ENCODE measurements at regions of chr1 and their contacts with region 1.

Region 1: GRCh38 chr1:16366722-16367257 is at the start of gene SZRD1:
- DNase-seq: peak; percentile 90
- H3K4me3 Mint-ChIP-seq: peak within 1 kb of the TSS; percentile 87
- H3K27ac Mint-ChIP-seq: peak within 1 kb of the TSS; percentile 74
- H3K4me1 Mint-ChIP-seq: peaks cover 10% of the 10 kb centered on the region
- H3K27me3 Mint-ChIP-seq: no peaks in the 10 kb centered on the region
- CTCF ChIP-seq: no peak
- total RNA-seq, gene SZRD1: 95.9 and 107 TPM in 2 replicates

Region 2: DNA sequence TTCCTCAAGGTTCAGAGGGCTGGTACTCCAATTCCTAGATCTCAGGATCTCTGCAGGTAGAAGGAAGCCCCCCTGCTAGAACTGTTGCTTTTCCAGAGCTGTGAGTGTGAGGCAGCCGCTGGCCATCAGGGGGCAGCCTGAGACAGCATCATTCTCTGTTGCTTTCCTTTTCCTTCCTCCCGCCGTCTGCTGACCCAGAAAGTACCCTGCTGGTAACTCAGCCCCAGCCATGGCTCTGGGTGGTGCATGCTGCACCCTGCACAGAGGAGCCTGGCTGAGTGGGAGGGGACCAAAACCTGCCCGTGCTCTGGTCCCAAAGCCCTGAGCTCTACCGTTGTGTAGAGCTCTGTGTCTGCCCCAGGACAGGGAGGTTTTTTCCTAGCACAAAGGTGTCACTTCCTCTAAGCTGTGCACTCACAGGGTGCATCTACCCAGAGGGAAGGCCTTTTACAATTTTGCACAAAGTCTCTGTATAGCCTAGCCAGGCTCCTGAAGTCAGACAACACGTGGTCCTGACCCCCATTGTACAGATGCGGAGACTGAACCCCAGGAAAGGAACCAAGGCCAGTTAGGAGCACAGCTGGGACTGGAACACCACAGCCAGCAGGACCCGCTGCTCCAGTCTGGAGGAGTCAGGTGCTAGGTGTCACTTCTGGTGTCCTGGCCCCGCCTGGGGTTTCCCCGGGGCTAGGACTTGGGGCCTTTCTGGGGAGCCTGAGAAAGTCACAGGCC is 287.7 kb before region 1 on chr1:
- CTCF ChIA-PET with region 1: interaction called, 8 read pairs
- intact Hi-C with region 1: loop called (anchors 5 kb)
- DNase-seq: peak; percentile 80
- H3K4me3 Mint-ChIP-seq: no peak overlapping the region
- H3K27ac Mint-ChIP-seq: no peak overlapping the region
- H3K4me1 Mint-ChIP-seq: peaks cover 30% of the 10 kb centered on the region
- H3K27me3 Mint-ChIP-seq: no peaks in the 10 kb centered on the region
- CTCF ChIP-seq: peak; percentile 73

Region 3: DNA sequence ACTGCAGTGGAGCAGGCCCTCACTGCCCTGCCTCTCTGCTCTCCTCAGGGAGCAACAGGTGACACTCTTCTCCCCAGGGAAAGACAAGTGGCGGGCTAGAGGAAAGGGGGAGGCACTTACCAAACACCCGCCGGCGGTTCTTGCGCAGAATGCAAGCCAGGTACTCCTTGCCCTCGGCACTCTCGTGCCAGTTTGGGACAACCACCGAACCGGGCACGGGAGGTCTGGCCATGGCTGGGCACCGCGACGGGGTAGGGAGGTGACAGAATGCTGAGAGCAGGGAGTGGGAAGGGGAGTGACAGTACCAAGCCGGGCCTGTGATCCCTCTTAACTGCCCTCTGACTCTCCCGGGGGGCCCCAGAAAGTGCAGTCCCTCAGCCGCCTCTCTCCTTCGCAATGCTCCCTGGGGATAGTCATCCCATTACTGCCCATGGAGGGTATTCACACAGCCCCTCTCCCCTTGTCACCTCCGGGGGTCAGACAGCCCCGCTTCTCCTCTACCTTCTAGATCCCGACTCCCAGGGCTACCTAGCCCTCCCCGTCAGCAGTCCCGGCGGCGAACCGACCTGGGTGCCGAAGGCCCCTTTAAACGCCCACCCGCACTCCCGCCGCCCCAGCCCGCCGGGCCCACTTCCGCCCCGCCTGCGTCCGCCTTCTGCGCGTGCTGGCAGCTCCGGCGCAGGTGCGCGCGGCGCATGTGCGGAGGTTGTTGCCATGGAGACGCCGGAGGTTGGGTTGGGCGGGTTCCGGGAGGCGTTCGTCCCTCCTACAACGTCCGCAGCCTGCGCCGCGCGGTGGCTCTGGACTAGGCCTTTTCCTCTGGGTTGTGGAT is 130.1 kb before region 1 on chr1 and contains the start of gene CPLANE2:
- CTCF ChIA-PET with region 1: interaction called, 3 read pairs
- intact Hi-C with region 1: loop called (anchors 5 kb)
- DNase-seq: peak; percentile 93
- H3K4me3 Mint-ChIP-seq: peak within 1 kb of the TSS; percentile 78
- H3K27ac Mint-ChIP-seq: peak within 1 kb of the TSS; percentile 87
- H3K4me1 Mint-ChIP-seq: no peaks in the 10 kb centered on the region
- H3K27me3 Mint-ChIP-seq: no peaks in the 10 kb centered on the region
- CTCF ChIP-seq: no peak
- total RNA-seq, gene CPLANE2: 4.2 and 7.4 TPM in 2 replicates

Region 4: GRCh38 chr1:16266411-16267118 is 100.2 kb before region 1 on chr1:
- CTCF ChIA-PET with region 1: no interaction called
- intact Hi-C with region 1: no loop called
- DNase-seq: no peak
- H3K4me3 Mint-ChIP-seq: no peak overlapping the region
- H3K27ac Mint-ChIP-seq: no peak overlapping the region
- H3K4me1 Mint-ChIP-seq: peaks cover 15% of the 10 kb centered on the region
- H3K27me3 Mint-ChIP-seq: no peaks in the 10 kb centered on the region
- CTCF ChIP-seq: no peak

Region 5: GRCh38 chr1:16289963-16290362 is 76.8 kb before region 1 on chr1:
- CTCF ChIA-PET with region 1: interaction called, 3 read pairs
- intact Hi-C with region 1: loop called (anchors 2 kb)
- DNase-seq: no peak
- H3K4me3 Mint-ChIP-seq: no peak overlapping the region
- H3K27ac Mint-ChIP-seq: no peak overlapping the region
- H3K4me1 Mint-ChIP-seq: no peaks in the 10 kb centered on the region
- H3K27me3 Mint-ChIP-seq: no peaks in the 10 kb centered on the region
- CTCF ChIP-seq: no peak

Region 6: GRCh38 chr1:16349847-16350406 is 16.9 kb before region 1 on chr1:
- CTCF ChIA-PET with region 1: interaction called, 10 read pairs
- intact Hi-C with region 1: no loop called
- DNase-seq: no peak
- H3K4me3 Mint-ChIP-seq: no peak overlapping the region
- H3K27ac Mint-ChIP-seq: no peak overlapping the region
- H3K4me1 Mint-ChIP-seq: peaks cover 10% of the 10 kb centered on the region
- H3K27me3 Mint-ChIP-seq: no peaks in the 10 kb centered on the region
- CTCF ChIP-seq: no peak

Region 7: GRCh38 chr1:17881761-17882160 is 1515.0 kb after region 1 on chr1:
- CTCF ChIA-PET with region 1: no interaction called
- intact Hi-C with region 1: no loop called
- DNase-seq: no peak
- H3K4me3 Mint-ChIP-seq: no peak overlapping the region
- H3K27ac Mint-ChIP-seq: no peak overlapping the region
- H3K4me1 Mint-ChIP-seq: no peaks in the 10 kb centered on the region
- H3K27me3 Mint-ChIP-seq: peaks cover 93% of the 10 kb centered on the region
- CTCF ChIP-seq: no peak